Cardiac septum (tissue), 1 donor: ENCODE measurements at regions of chr7 and their contacts with region 1.

Region 1: GRCh38 chr7:100611974-100612729 is at the start of gene MOSPD3:
- DNase-seq: peak; percentile 99
- total RNA-seq, gene MOSPD3: 9.2 TPM

Region 2: DNA sequence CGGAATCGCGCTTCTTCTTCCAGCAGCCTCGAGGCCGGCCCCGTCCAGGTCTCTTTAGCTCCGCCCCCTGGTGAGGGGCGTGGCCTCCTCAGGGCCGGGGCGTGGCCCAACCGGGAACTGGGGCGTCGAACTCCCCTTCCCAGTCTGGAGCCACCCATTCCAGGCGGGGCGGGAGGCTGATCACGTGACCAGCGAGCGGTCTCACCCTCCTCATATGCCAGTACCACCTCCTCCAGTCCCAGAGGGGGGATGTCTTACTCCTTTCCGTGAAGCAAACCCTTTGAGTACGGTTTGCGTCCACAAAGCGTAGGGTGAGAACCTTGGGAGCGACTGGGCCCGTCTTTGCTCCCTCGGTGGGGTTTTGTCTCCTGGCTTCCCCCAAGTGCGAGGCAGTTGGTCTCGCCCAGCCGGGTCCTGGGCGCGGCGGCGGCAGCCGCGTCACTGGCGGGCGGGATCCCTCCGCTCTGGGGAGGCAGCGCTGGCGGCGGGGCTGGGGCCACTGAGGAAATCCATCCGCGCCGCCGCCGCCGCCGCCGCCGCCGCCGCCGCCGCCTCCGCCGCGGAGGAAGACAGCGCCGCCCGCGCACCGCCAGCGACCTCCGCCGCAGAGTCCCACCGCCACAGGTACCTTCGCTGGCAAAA is 61.3 kb after region 1 on chr7 and contains the start of gene GNB2:
- intact Hi-C with region 1: loop called (anchors 2 kb)
- DNase-seq: peak; percentile 100
- total RNA-seq, gene GNB2: 123 TPM